CD8-positive, alpha-beta T cell (primary cell): ENCODE measurements at regions of chrX and their contacts with region 1.

Region 1: DNA sequence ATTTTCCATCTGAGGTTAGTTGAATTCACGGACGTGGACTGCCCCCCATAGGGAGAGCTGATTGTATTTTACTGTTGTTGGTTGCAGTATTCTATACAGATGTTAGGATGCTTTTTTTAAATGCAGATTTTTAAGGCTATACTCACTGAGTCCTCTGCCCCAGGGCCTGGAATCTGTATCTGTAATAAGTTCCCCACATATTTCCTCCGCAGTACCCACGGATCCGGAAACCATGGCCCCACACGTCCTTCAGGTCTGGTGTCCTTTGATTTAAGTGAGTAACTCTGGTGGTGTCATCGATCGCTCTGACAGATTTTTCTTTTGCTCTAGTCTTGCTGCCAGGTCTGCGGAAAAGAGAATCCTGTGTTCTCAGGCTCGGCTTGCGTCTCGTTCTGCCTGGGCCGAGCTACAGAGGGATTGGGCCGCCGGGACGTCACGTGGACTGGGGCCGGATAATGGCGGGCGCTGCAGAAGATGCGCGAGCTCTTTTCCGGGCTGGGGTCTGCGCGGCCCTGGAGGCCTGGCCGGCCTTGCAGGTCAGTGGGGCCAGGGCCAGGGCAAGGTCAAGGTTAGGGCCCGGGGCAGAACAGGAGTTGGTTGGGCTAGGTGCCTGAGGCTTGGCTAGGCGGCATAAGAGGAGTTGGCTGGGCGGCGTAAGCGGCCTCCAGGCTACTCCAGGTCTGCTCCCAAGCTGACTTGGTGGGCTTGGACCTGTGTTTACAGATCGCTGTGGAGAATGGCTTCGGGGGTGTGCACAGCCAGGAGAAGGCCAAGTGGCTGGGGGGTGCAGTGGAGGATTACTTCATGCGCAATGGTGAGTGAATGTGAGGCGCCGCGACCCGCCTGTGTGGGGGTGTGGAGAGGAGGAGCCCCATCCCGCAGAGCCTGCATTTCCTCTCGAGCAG is at the start of gene TSR2:
- DNase-seq: peak; percentile 55 to 90 (median 78)
- ATAC-seq: peak; percentile 93
- H3K4me3 ChIP-seq: peak within 1 kb of the TSS; percentile 93 to 96
- H3K4me3 Mint-ChIP-seq: peak within 1 kb of the TSS; percentile 92
- H3K27ac ChIP-seq: peak within 1 kb of the TSS; percentile 66 to 73
- H3K27ac Mint-ChIP-seq: peak within 1 kb of the TSS; percentile 91
- H3K4me1 ChIP-seq: peaks cover 21% of the 10 kb centered on the region
- H3K4me1 Mint-ChIP-seq: peaks cover 31% of the 10 kb centered on the region
- H3K27me3 ChIP-seq: no peaks in the 10 kb centered on the region
- H3K27me3 Mint-ChIP-seq: no peaks in the 10 kb centered on the region
- CTCF ChIP-seq: no peak
- total RNA-seq, gene TSR2: 38.7 to 41.4 TPM

Region 2: GRCh38 chrX:53422086-53422860 is 1017.9 kb before region 1 on chrX and contains the start of gene SMC1A:
- CTCF ChIA-PET with region 1: no interaction called
- POLR2A ChIA-PET with region 1: no interaction called
- intact Hi-C with region 1: loop called in 1 of 2 experiments (anchors 10 kb)
- DNase-seq: peak; percentile 86 to 98 (median 96)
- ATAC-seq: peak; percentile 89
- H3K4me3 ChIP-seq: peak within 1 kb of the TSS; percentile 92 to 94
- H3K4me3 Mint-ChIP-seq: peak within 1 kb of the TSS; percentile 94
- H3K27ac ChIP-seq: peak within 1 kb of the TSS; percentile 95 to 99
- H3K27ac Mint-ChIP-seq: peak within 1 kb of the TSS; percentile 95
- H3K4me1 ChIP-seq: peaks cover 18% of the 10 kb centered on the region
- H3K4me1 Mint-ChIP-seq: peaks cover 33% of the 10 kb centered on the region
- H3K27me3 ChIP-seq: no peaks in the 10 kb centered on the region
- H3K27me3 Mint-ChIP-seq: no peaks in the 10 kb centered on the region
- CTCF ChIP-seq: no peak
- total RNA-seq, gene SMC1A: 23.7 to 25.3 TPM

Region 3: DNA sequence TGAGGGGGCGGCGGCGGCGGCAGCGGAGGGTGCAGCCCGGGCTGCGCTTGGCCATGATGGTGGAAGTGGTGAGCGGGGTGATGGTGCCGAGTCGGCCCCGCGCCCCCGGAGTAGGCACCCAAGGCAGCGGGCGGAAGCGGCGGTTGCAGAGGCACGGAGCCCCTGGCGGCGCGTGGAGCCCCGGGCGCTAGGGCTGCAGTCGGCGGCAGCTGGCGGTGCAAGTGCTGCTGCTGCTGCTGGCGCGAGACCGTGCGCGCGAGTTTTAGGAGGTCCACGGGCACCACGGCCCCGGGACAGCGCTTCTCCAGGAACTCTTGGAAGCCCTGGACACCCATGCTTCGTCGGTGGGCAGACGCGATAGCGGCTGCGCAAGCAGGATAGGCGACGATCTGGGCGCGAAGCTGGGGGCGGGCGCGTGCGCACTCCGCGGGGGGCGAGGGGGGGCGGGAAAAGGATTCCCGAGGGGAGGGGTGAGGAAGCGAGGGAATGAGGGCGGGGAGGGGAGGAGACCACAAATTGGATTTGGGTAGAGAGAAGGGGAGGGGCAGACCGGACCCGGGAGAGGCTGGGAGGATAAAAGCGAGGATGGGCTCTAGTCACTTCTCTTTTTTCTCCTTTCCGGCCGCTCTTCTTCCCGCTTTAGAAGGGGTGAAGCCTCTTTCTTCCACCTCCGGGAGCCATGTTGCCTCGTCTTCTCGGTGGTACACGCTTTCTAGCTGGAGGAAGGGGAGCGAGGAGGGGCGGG is 257.2 kb before region 1 on chrX and contains the start of gene FAM120C:
- CTCF ChIA-PET with region 1: no interaction called
- POLR2A ChIA-PET with region 1: interaction called, 6 read pairs
- intact Hi-C with region 1: loop called (anchors 1 to 2 kb)
- DNase-seq: peak; percentile 26 to 83 (median 59)
- ATAC-seq: peak; percentile 70
- H3K4me3 ChIP-seq: peak within 1 kb of the TSS; percentile 60 to 72
- H3K4me3 Mint-ChIP-seq: peak within 1 kb of the TSS; percentile 78
- H3K27ac ChIP-seq: peak within 1 kb of the TSS; percentile 75 to 83
- H3K27ac Mint-ChIP-seq: peak within 1 kb of the TSS; percentile 88
- H3K4me1 ChIP-seq: peaks cover 38% of the 10 kb centered on the region
- H3K4me1 Mint-ChIP-seq: peaks cover 43% of the 10 kb centered on the region
- H3K27me3 ChIP-seq: no peaks in the 10 kb centered on the region
- H3K27me3 Mint-ChIP-seq: no peaks in the 10 kb centered on the region
- CTCF ChIP-seq: no peak
- total RNA-seq, gene FAM120C: 10.9 to 11.1 TPM

Region 4: GRCh38 chrX:54423161-54423888 is 16.9 kb before region 1 on chrX:
- CTCF ChIA-PET with region 1: no interaction called
- POLR2A ChIA-PET with region 1: no interaction called
- intact Hi-C with region 1: no loop called
- DNase-seq: peak in 2 of 9 experiments; percentile 4 to 22
- ATAC-seq: no peak
- H3K4me3 ChIP-seq: no peak overlapping the region
- H3K4me3 Mint-ChIP-seq: no peak overlapping the region
- H3K27ac ChIP-seq: no peak overlapping the region
- H3K27ac Mint-ChIP-seq: no peak overlapping the region
- H3K4me1 ChIP-seq: no peaks in the 10 kb centered on the region
- H3K4me1 Mint-ChIP-seq: no peaks in the 10 kb centered on the region
- H3K27me3 ChIP-seq: no peaks in the 10 kb centered on the region
- H3K27me3 Mint-ChIP-seq: peaks cover 7% of the 10 kb centered on the region
- CTCF ChIP-seq: no peak

Region 5: DNA sequence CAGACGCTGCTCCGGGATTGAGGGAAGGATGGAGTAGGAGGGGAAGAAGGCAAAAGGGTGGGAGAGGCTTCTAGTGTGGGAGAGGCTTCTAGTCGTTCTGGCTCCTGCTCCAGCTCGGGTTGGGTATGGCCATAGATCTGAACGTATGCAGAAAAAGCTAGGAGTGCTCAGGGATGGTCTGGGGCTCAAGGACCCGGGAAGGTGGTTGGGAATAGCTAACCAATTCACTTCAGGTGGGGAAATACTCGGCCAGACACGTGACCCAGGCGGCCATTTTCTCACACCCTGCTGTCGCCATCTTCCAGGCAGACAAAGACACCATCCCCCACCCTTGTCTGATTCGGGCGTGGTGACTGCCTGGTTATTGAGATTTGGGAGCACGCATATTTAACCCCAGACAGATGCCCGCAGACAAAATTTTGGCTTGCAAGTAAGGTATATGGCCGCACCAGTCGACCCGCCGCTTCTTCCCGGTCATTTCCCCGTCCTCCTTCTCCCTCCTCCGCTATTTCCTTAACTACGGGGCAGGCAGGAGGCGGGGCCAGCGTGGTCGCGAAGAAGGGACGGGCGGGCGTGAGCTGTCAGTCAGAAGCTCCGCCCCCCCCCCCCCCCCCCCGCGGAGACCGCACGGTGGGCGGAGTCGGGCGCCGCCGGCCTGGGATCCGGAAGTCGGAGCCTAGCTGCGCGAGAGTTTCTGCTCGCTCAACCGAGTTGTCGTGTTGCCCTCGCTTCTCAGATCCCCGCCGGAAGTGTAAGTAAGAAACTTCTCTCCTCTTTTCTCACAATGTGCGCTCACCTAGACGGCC is 89.5 kb after region 1 on chrX and contains the start of gene GNL3L:
- CTCF ChIA-PET with region 1: no interaction called
- POLR2A ChIA-PET with region 1: interaction called, 13 read pairs
- intact Hi-C with region 1: loop called (anchors 1 to 2 kb)
- DNase-seq: peak; percentile 55 to 89 (median 78)
- ATAC-seq: peak; percentile 83
- H3K4me3 ChIP-seq: peak within 1 kb of the TSS; percentile 85 to 95
- H3K4me3 Mint-ChIP-seq: peak within 1 kb of the TSS; percentile 97
- H3K27ac ChIP-seq: peak within 1 kb of the TSS; percentile 79 to 94
- H3K27ac Mint-ChIP-seq: peak within 1 kb of the TSS; percentile 97
- H3K4me1 ChIP-seq: peaks cover 22% of the 10 kb centered on the region
- H3K4me1 Mint-ChIP-seq: peaks cover 40% of the 10 kb centered on the region
- H3K27me3 ChIP-seq: no peaks in the 10 kb centered on the region
- H3K27me3 Mint-ChIP-seq: no peaks in the 10 kb centered on the region
- CTCF ChIP-seq: no peak
- total RNA-seq, gene GNL3L: 20.9 to 24.0 TPM